Activated B cell treated with CpG ODN at 0.5 μM for 24 hours (primary cell): ENCODE measurements at regions of chr13 and their contacts with region 1.

Region 1: DNA sequence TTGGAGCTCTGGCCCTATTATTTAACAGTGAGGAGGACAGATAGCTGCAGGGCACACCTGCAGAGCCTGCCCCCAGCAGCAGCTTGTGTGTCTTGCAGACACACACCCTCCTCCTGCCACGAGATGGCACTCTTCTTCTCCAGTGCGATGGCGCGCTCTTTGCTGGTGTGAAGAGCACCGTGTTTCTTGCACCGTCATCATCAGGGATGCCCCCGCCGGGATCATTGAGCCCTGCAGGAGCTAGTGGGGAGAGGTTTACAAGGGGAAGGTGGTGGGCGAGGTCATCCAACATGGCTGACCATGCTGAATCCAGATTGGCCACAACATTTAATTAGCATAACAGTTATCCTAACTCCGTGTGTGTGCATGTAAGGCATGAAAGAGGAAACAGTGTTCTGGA is 105.6 kb downstream of the RAB20 start:
- DNase-seq: peak; percentile 50
- ATAC-seq: peak; percentile 96
- H3K4me3 Mint-ChIP-seq: peak overlapping the region; percentile 72
- H3K27ac Mint-ChIP-seq: no peak overlapping the region
- H3K4me1 Mint-ChIP-seq: peaks cover 15% of the 10 kb centered on the region
- H3K27me3 Mint-ChIP-seq: peaks cover 2% of the 10 kb centered on the region
- CTCF ChIP-seq: peak; percentile 40

Region 2: GRCh38 chr13:110471833-110472162 is 15.9 kb after region 1 on chr13:
- CTCF ChIA-PET with region 1: interaction called, 18 read pairs
- POLR2A ChIA-PET with region 1: interaction called, 6 read pairs
- intact Hi-C with region 1: loop called (anchors 1 kb)
- DNase-seq: peak; percentile 59
- ATAC-seq: peak; percentile 93
- H3K4me3 Mint-ChIP-seq: peak overlapping the region; percentile 73
- H3K27ac Mint-ChIP-seq: peak overlapping the region; percentile 83
- H3K4me1 Mint-ChIP-seq: peaks cover 55% of the 10 kb centered on the region
- H3K27me3 Mint-ChIP-seq: no peaks in the 10 kb centered on the region
- CTCF ChIP-seq: no peak

Region 3: DNA sequence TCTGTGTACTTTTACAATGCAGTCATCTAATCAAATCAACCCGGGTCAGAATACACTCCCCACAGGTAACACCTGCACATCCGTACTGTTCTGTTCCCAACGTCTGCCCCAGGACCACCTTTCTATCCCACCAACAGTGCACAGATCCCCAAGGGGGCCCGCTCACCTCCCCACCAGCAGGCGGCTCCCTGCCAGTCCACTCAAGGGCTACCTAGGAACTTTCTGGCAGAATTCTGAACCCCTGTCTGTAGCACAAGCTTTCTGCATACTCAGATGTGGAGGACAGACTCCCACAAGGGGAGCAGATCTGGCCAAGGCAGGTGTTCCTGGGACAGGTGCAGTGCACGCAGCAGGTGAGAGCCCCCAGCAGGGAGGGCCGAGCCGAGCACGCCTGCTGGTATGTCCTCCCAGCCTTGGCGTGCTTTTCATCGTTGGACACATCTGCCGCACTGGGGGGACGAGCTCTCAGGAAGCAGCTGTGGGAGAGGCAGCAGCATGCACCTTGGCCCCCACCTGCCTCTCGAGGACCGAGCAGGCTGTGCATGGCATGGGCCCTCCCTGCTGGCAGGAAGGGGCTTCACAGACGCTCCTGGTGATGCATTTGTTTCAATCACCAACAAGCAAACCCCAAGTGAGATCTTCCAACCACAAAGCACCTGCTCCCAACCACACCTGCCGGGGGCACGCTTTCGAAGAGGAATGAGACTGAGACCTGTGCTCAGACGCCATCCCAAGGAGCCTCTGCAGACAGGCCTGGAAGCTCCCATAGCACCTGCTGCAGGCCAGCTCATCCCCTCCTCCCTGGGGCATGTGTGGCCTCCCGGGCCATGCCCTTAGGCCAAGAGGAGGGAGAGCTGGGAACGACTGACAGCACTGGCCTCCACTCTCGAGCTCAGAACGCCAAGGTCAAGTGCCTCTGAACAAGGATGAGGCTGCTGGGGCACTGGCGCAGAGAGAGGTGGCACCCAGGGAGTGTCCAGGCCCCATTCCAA is 69.7 kb after region 1 on chr13:
- CTCF ChIA-PET with region 1: interaction called, 14 read pairs
- POLR2A ChIA-PET with region 1: no interaction called
- intact Hi-C with region 1: loop called (anchors 1 kb)
- DNase-seq: no peak
- ATAC-seq: peak; percentile 77
- H3K4me3 Mint-ChIP-seq: no peak overlapping the region
- H3K27ac Mint-ChIP-seq: no peak overlapping the region
- H3K4me1 Mint-ChIP-seq: peaks cover 31% of the 10 kb centered on the region
- H3K27me3 Mint-ChIP-seq: no peaks in the 10 kb centered on the region
- CTCF ChIP-seq: no peak

Region 4: GRCh38 chr13:110593430-110594130 is 137.6 kb after region 1 on chr13:
- CTCF ChIA-PET with region 1: interaction called, 13 read pairs
- POLR2A ChIA-PET with region 1: no interaction called
- intact Hi-C with region 1: loop called (anchors 1 kb)
- DNase-seq: no peak
- ATAC-seq: peak; percentile 81
- H3K4me3 Mint-ChIP-seq: no peak overlapping the region
- H3K27ac Mint-ChIP-seq: no peak overlapping the region
- H3K4me1 Mint-ChIP-seq: no peaks in the 10 kb centered on the region
- H3K27me3 Mint-ChIP-seq: no peaks in the 10 kb centered on the region
- CTCF ChIP-seq: no peak

Region 5: GRCh38 chr13:110819203-110820014 is 363.5 kb after region 1 on chr13:
- CTCF ChIA-PET with region 1: interaction called, 19 read pairs
- POLR2A ChIA-PET with region 1: no interaction called
- intact Hi-C with region 1: loop called (anchors 1 kb)
- DNase-seq: peak; percentile 64
- ATAC-seq: peak; percentile 92
- H3K4me3 Mint-ChIP-seq: no peak overlapping the region
- H3K27ac Mint-ChIP-seq: no peak overlapping the region
- H3K4me1 Mint-ChIP-seq: peaks cover 3% of the 10 kb centered on the region
- H3K27me3 Mint-ChIP-seq: peaks cover 2% of the 10 kb centered on the region
- CTCF ChIP-seq: peak; percentile 67